ENCODE measurements at regions of chr19 and their contacts with region 1.

Region 1: DNA sequence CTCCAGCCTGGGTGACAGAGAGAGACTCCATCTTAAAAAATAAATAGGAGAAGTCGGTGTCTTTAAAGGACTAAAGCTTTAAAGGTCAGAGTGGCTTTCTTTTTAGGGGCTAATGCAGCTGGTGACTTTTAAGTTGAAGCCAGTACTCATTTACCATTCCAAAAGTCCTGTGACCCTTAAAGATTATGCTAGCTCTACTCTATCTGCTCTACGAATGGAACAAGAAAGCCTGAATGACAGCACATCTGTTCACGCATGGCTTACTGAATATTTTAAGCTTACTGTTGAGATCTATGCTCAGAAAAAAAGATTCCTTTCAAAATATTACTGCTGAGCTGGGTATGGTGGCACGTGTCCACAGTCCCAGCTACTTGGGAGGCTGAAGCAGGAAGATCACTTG is 16.4 kb downstream of the TDRD12 start:
- DNase-seq: no peak
- H3K4me3 ChIP-seq: no peak overlapping the region
- H3K27ac ChIP-seq: no peak overlapping the region
- H3K4me1 ChIP-seq: no peaks in the 10 kb centered on the region
- H3K27me3 ChIP-seq: no peaks in the 10 kb centered on the region
- CTCF ChIP-seq: no peak

Region 2: GRCh38 chr19:32674959-32675719 is 60.8 kb before region 1 on chr19 and contains the start of gene ANKRD27:
- CTCF ChIA-PET with region 1: no interaction called
- dilution Hi-C with region 1: loop called (anchors 10 kb)
- in situ Hi-C with region 1: no loop called
- intact Hi-C with region 1: no loop called
- DNase-seq: peak; percentile 98
- H3K4me3 ChIP-seq: peak within 1 kb of the TSS; percentile 79 to 96 (median 94)
- H3K27ac ChIP-seq: peak within 1 kb of the TSS; percentile 52
- H3K4me1 ChIP-seq: peaks cover 12% of the 10 kb centered on the region
- H3K27me3 ChIP-seq: peaks cover 14% of the 10 kb centered on the region
- CTCF ChIP-seq: no peak
- total RNA-seq, gene ANKRD27: 26.7 to 34.1 TPM

Region 3: DNA sequence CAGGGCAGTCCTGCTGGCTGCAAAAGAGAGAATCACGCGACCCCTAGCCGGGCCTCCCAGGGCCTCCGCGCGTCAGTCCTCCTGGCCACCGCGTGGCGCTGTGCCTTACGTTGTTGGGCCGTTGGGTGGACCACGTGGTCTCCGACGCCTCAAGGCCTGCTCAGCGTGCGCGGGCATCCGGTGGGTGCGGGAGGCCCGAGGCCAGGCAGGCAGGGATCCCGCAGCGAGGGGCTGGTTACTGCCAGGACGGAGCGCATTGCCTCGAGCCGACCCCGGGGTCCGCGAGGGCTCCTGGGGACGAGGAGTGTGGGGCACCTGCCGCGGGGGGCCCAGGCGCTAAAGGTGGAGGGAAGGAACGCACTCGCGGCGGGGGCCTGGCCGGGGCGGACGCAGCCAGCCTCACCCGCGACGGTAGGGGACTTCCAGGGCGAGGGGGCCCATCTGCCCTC is 16.3 kb before region 1 on chr19 and contains the start of gene TDRD12:
- CTCF ChIA-PET with region 1: no interaction called
- dilution Hi-C with region 1: no loop called
- in situ Hi-C with region 1: no loop called
- intact Hi-C with region 1: no loop called
- DNase-seq: no peak
- H3K4me3 ChIP-seq: no peak within 1 kb of the TSS
- H3K27ac ChIP-seq: no peak within 1 kb of the TSS
- H3K4me1 ChIP-seq: no peaks in the 10 kb centered on the region
- H3K27me3 ChIP-seq: no peaks in the 10 kb centered on the region
- CTCF ChIP-seq: no peak
- total RNA-seq, gene TDRD12: 12.5 TPM in 1 of 2 donors, not detected in the other

Region 4: GRCh38 chr19:32789429-32789828 is 53.5 kb after region 1 on chr19:
- CTCF ChIA-PET with region 1: no interaction called
- dilution Hi-C with region 1: loop called (anchors 10 kb)
- in situ Hi-C with region 1: no loop called
- intact Hi-C with region 1: no loop called
- DNase-seq: no peak
- H3K4me3 ChIP-seq: no peak overlapping the region
- H3K27ac ChIP-seq: no peak overlapping the region
- H3K4me1 ChIP-seq: no peaks in the 10 kb centered on the region
- H3K27me3 ChIP-seq: no peaks in the 10 kb centered on the region
- CTCF ChIP-seq: no peak

Region 5: GRCh38 chr19:33430674-33431277 is 694.8 kb after region 1 on chr19:
- CTCF ChIA-PET with region 1: no interaction called
- dilution Hi-C with region 1: no loop called
- in situ Hi-C with region 1: no loop called
- intact Hi-C with region 1: no loop called
- DNase-seq: peak; percentile 44
- H3K4me3 ChIP-seq: no peak overlapping the region
- H3K27ac ChIP-seq: no peak overlapping the region
- H3K4me1 ChIP-seq: no peaks in the 10 kb centered on the region
- H3K27me3 ChIP-seq: no peaks in the 10 kb centered on the region
- CTCF ChIP-seq: peak; percentile 80 to 91

Measured in mammary epithelial cell (primary cell).